ENCODE measurements at regions of chr10 and their contacts with region 1.

Region 1: DNA sequence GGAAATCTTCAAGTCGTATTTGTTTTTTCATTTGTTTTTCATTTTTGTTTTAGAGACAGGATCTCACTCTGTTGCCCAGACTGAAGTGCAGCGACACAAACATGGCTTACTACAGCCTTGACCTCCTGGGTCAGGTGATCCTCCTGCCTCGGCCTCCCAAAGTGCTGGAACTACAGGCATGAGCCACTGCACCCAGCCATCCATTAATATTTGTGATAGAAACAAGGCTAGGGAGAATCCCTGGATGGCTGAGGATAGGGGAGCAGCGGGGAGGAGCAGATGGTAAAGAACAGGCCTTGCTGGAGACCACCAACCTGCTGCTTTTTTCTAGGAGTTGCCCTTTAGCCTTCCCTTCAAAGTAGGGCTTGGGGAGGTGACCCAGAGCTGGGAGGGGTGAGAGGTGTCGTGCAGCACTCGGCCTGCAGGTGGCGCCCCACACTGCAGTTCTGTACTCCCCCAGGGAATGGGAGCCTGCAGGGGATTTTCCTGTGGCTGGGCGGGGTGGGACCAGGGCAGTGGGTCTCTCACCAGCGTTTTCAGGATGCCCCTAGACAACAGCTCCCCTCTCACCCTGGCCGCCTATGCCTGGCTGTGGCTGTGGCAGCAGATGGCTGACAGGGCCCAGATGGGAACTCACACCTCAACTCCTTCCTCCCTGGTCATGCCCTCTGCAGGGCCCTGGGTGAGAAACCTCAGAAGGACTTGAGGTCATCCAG is 12.6 kb upstream of the CDH23 start:
- DNase-seq: peak; percentile 75
- ATAC-seq: peak; percentile 92 to 94

Region 2: GRCh38 chr10:71608819-71609768 is 225.0 kb after region 1 on chr10:
- intact Hi-C with region 1: loop called in 1 of 2 experiments (anchors 5 kb)
- DNase-seq: peak; percentile 84
- ATAC-seq: peak; percentile 49 to 59

Region 3: DNA sequence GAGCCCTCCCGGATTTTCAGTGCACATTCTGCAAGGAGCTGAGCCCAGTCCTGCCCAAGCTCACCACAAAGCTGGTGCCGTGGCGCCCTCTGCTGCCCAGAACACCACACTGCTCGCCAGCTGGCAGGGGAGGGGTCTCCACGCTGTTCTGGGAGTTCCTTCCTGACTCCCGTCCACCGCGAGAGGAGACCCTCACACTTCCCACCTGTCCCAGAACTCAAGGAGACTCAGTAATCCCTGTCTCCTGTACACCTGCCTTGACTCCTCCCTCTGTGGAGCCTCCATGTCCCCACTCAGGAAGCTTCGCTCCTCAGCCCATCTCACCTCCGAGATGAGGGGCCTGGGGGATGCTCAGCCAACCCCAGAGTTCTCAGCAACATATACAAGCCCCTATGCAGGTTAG is 324.2 kb after region 1 on chr10:
- intact Hi-C with region 1: loop called (anchors 5 kb)
- DNase-seq: peak; percentile 74
- ATAC-seq: peak; percentile 33 to 40

Region 4: DNA sequence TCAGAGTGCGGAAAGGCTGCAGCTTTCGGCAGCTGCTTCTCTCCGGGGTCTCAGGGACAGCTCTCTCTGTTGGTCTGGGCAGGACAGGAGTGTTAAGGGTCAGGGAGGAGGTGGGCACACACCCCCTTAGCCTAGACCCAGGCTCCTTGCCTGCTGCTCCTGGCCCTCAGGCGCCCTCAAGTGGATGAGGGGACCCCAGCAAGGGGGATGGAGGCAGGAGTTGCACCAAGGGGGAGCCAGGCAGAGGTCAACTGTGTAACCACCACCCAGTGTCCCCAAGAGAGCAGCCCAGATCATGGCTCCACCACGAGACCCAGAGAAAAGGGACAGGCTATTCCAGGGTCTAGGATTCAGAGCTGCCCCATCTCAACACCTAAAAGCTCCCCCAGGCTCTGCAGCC is 677.4 kb after region 1 on chr10:
- intact Hi-C with region 1: no loop called
- DNase-seq: no peak
- ATAC-seq: no peak

Measured in left cardiac atrium (tissue), 4 donors.